K562 (cell line): ENCODE measurements at regions of chr2 and their contacts with region 1.

Region 1: GRCh38 chr2:218292048-218293014 is at the start of gene TMBIM1:
- DNase-seq: peak; percentile 83 to 89 (median 86)
- ATAC-seq: peak; percentile 79
- H3K4me3 ChIP-seq: peak within 1 kb of the TSS; percentile 62
- H3K27ac ChIP-seq: peak within 1 kb of the TSS; percentile 88
- H3K4me1 ChIP-seq: peaks cover 40 to 48% of the 10 kb centered on the region in 2 experiments
- H3K27me3 ChIP-seq: no peaks in the 10 kb centered on the region
- CTCF ChIP-seq: peak; percentile 60 to 76 (median 63)
- EP300 ChIP-seq: no peak
- POLR2A ChIP-seq: peak; percentile 51
- RAD21 ChIP-seq: peak; percentile 32 to 47
- polyA plus RNA-seq, gene TMBIM1: 14.2 to 35.6 TPM

Region 2: GRCh38 chr2:218276986-218277755 is 15.2 kb before region 1 on chr2:
- CTCF ChIA-PET with region 1: no interaction called
- POLR2A ChIA-PET with region 1: interaction called, 19 read pairs
- in situ Hi-C with region 1: no loop called
- intact Hi-C with region 1: loop called (anchors 2 kb)
- DNase-seq: no peak
- ATAC-seq: no peak
- H3K4me3 ChIP-seq: no peak overlapping the region
- H3K27ac ChIP-seq: no peak overlapping the region
- H3K4me1 ChIP-seq: peaks cover 0 to 14% of the 10 kb centered on the region in 2 experiments; a peak in 3 of 5 replicates
- H3K27me3 ChIP-seq: no peaks in the 10 kb centered on the region
- CTCF ChIP-seq: peak; percentile 3 to 18 (median 12); a peak in 1 of 6 replicates
- EP300 ChIP-seq: no peak
- POLR2A ChIP-seq: no peak
- RAD21 ChIP-seq: no peak

Region 3: DNA sequence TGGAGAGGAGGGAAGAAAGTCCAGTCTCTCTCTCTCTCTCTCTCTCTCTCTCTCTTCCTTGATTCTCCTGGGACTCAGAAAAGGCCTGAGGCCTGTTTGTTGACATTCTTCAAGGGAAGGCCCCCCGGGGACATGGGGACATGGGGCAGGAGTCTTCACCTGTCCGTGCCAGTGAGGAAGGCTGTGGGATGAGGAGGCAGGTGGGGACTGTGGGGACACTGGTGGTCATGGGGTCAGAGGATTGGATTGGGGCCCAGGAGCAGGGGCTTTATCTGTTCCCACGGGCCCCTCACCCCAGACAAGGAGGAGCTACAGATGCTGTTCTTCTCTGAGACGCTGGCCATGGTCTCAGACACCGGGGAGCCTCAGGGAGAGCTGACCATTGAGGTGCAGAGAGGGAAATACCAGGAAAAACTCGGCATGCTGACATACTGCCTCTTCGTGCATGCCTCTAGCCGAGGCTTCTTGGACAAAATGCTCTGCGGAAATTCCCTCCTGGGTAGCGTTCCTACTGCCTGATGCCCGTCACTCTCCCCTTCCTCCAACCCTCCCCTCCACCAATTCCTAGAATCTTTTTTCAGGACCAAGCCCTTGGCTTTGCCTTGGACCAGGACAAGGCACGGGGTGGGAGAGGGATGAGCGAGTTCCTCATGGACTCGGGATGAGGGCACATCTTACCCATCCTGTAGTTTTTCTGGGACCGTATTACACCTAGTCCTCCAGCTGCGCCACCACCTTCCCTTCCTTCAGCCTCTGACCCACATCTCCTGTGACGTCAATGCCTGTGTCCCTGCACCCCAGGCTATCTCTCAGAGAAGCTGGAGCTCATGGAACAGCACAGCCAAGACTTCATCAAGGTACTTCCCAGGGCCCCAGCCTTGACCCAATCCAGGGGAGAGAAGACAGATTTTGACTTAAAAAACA is 65.2 kb after region 1 on chr2:
- CTCF ChIA-PET with region 1: no interaction called
- POLR2A ChIA-PET with region 1: no interaction called
- in situ Hi-C with region 1: no loop called
- intact Hi-C with region 1: no loop called
- DNase-seq: peak in 1 of 4 experiments; percentile 18
- ATAC-seq: no peak
- H3K4me3 ChIP-seq: no peak overlapping the region
- H3K27ac ChIP-seq: no peak overlapping the region
- H3K4me1 ChIP-seq: peaks cover 25 to 33% of the 10 kb centered on the region in 2 experiments; a peak in 4 of 5 replicates
- H3K27me3 ChIP-seq: no peaks in the 10 kb centered on the region
- CTCF ChIP-seq: no peak
- EP300 ChIP-seq: no peak
- POLR2A ChIP-seq: no peak
- RAD21 ChIP-seq: no peak

Region 4: DNA sequence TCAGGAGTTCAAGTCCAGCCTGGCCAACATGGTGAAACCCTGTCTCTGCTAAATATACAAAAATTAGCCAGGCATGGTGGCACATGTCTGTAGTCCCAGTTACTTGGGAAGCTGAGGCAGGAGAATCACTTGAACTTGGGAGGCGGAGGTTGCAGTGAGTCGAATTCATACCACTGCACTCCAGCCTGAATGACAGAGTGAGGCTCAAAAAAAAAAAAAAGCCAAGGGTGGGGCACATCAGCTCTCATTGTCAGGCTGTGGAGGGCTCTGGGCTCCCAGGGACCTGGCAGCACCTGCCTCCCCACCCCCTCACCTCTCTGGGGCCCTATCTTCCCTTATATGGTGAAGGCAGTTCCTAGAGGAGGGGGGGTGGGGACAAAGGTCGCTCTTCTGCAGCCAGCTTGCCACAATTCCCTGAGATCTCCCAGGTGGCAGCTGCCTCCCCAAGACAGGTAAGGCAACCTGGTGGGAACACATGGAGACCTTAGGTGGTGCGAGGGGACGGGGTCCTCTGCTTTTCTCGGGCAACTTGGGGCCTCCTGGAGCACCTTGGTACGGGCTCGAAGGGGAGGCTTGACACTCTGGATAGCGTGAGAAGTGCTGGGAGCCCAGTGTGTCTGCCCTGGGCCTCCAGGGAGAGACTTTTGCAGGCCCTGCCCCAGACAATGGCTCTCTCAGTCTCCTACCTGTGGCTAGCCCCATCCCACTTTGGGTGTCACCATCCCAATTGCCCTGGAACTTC is 126.6 kb after region 1 on chr2 and contains the start of gene VIL1:
- CTCF ChIA-PET with region 1: no interaction called
- POLR2A ChIA-PET with region 1: no interaction called
- in situ Hi-C with region 1: no loop called
- intact Hi-C with region 1: no loop called
- DNase-seq: peak in 1 of 4 experiments; percentile 23
- ATAC-seq: peak; percentile 20; the same call in 2 of the 3 replicates
- H3K4me3 ChIP-seq: no peak within 1 kb of the TSS
- H3K27ac ChIP-seq: no peak within 1 kb of the TSS; the same call in 2 of the 3 replicates
- H3K4me1 ChIP-seq: peaks cover 37 to 53% of the 10 kb centered on the region in 2 experiments; a peak in 4 of 5 replicates
- H3K27me3 ChIP-seq: no peaks in the 10 kb centered on the region
- CTCF ChIP-seq: no peak
- EP300 ChIP-seq: no peak
- POLR2A ChIP-seq: no peak
- RAD21 ChIP-seq: no peak
- polyA plus RNA-seq, gene VIL1: 0.62 to 0.73 TPM

Region 5: DNA sequence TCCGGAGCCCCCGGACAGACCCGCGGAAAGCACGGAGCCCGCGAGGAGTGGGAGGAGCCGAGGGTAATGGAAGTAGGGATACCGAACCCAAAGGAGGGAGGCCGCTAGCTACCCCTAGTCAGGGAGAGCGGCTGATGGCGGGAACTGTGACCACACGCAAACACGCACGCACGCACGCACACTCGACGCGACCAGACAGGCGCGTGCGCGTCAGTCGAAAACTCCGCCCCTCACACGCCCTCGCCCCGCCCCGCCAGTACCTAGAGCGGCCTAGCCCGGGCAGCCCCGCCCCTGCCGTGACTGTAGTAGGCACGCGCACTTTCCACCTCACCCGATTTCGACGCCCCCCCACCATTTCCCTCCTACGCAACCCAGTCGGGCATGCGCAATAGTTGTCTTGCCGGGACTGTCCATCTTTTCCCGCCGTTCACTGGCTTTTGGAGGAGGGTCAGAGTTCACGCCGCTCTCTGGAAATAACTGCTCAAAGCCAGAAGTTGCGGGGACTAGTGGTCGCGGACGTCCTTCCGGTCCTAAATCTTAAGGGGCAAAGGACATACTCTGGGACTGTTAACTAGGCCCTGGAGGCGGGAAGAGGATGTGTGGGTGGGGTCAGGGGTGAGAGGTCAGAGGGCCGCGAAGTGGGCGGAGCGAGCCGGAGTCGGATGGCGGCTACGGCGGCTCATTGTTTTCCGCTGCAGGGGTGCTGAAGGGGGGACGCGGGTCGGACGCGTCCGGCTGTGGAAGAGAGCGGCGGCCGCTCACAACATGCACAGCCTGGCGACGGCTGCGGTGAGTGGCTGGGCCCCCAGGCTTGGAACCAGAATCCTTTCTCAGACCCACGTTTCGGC is 276.1 kb after region 1 on chr2 and contains the starts of genes CNOT9 and USP37:
- CTCF ChIA-PET with region 1: no interaction called
- POLR2A ChIA-PET with region 1: no interaction called
- in situ Hi-C with region 1: no loop called
- intact Hi-C with region 1: loop called (anchors 5 kb)
- DNase-seq: peak; percentile 88 to 96 (median 92)
- ATAC-seq: peak; percentile 91
- H3K4me3 ChIP-seq: peak within 1 kb of the TSS; percentile 77
- H3K27ac ChIP-seq: peak within 1 kb of the TSS; percentile 94
- H3K4me1 ChIP-seq: peaks cover 8 to 9% of the 10 kb centered on the region in 2 experiments; a peak in 4 of 5 replicates
- H3K27me3 ChIP-seq: no peaks in the 10 kb centered on the region
- CTCF ChIP-seq: no peak
- EP300 ChIP-seq: peak; percentile 20; the same call in 1 of the 2 replicates
- POLR2A ChIP-seq: peak; percentile 70
- RAD21 ChIP-seq: no peak
- polyA plus RNA-seq, gene CNOT9: 19.0 to 27.4 TPM
- polyA plus RNA-seq, gene USP37: 2.0 to 2.8 TPM